Adrenal gland (tissue), 19 donors: ENCODE measurements at regions of chr14 and their contacts with region 1.

Region 1: GRCh38 chr14:100900837-100901390 is 2.6 kb downstream of the RTL1 start:
- DNase-seq: peak; percentile 79 to 91 (median 84)
- H3K4me3 ChIP-seq: peak overlapping the region in 1 of 4 donors; percentile 18
- H3K27ac ChIP-seq: peak overlapping the region; percentile 29 to 79 (median 56)
- H3K4me1 ChIP-seq: peaks cover 29 to 50% of the 10 kb centered on the region in 2 donors
- H3K27me3 ChIP-seq: no peaks in the 10 kb centered on the region
- CTCF ChIP-seq: peak; percentile 20 to 68 (median 52)
- POLR2A ChIP-seq: peak in 1 of 2 donors; percentile 26

Region 2: DNA sequence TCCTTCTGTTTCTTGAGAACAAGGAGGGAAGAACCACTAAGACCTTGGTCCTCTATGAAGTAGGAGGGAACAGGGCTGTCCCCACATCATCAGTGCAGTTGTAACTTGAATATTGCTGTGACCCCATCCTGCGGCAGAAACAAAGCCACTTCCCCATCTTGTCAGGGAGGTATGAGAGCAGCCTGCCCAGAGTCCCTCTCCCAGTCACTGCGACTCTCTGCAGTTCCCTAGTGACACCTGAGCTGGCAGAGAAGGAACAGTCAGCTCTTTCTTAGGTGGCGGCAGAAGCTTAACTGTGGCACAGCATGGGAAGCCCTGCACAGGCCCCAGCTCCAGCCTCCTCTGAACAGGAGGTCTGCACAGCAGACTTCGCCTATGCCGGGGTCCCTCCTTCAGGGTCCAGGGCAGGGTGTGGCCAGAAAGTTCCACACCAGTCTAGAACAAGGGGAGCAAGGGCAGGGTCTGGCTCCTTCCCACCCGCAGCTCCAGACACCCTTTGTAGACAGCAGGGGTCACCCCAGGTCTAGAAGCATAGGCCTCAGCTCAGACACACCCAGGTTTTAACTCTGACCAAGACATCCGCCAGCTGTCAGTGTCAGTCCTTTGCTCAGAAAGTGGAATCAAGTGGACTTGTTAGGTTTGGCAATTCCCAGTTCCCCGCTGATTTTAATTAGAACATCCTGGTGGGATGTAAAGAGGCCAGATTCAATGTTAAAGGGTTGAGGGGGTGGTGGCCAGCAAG is 778.3 kb before region 1 on chr14:
- intact Hi-C with region 1: no loop called
- DNase-seq: no peak
- H3K4me3 ChIP-seq: no peak overlapping the region
- H3K27ac ChIP-seq: no peak overlapping the region
- H3K4me1 ChIP-seq: no peaks in the 10 kb centered on the region
- H3K27me3 ChIP-seq: no peaks in the 10 kb centered on the region
- CTCF ChIP-seq: no peak
- POLR2A ChIP-seq: no peak

Region 3: GRCh38 chr14:100850841-100851585 is 49.9 kb before region 1 on chr14:
- intact Hi-C with region 1: loop called in 1 of 2 experiments (anchors 5 kb)
- DNase-seq: peak; percentile 69 to 91 (median 81)
- H3K4me3 ChIP-seq: no peak overlapping the region
- H3K27ac ChIP-seq: peak overlapping the region in 3 of 5 donors; percentile 29 to 66 (median 48)
- H3K4me1 ChIP-seq: peaks cover 0 to 31% of the 10 kb centered on the region in 2 donors
- H3K27me3 ChIP-seq: no peaks in the 10 kb centered on the region
- CTCF ChIP-seq: peak; percentile 69 to 92 (median 84)
- POLR2A ChIP-seq: no peak

Region 4: GRCh38 chr14:101135796-101136742 is 235.2 kb after region 1 on chr14:
- intact Hi-C with region 1: no loop called
- DNase-seq: no peak
- H3K4me3 ChIP-seq: no peak overlapping the region
- H3K27ac ChIP-seq: no peak overlapping the region
- H3K4me1 ChIP-seq: no peaks in the 10 kb centered on the region
- H3K27me3 ChIP-seq: no peaks in the 10 kb centered on the region
- CTCF ChIP-seq: no peak
- POLR2A ChIP-seq: no peak